Sciatic nerve (tissue), 2 donors: ENCODE measurements at regions of chr13 and their contacts with region 1.

Region 1: DNA sequence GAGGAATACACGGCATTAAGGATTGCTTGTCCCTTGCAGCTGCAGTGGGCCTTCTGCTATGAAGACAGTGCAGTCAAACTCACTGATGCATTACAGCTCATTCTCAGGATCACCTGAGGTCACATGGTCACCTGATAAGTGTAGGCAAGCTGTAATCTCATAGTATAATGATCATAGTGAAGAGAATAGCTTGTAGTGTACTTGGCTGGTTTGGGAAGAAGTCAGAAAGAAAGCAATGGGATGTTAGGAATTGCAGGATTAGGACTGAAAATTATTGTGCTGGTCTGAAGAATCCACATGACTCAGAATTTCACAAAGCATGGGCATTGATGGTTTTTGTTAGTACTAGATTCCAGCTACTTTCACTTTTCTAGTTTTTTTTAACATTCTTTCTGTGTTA is 76.7 kb downstream of the MBNL2 start:
- DNase-seq: no peak
- ATAC-seq: no peak

Region 2: DNA sequence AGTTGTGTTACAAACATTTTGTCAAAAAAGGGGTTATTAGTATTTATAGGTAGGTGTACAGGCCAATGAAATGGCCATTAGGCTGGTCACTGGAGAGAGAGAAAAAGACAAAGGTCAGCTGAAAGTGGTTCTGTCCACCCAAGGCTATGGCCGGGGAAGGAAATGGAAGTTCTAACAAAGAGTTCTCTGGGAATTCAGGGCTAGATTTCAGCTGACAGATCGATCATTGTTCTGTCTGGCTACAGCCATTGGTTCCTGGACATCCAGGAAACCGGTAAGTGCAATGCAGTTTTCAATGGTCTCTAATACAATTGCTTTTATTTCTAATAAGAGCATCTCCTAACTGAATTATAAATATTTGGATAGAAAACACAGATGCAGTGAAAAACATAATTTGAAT is 34.2 kb before region 1 on chr13:
- intact Hi-C with region 1: loop called (anchors 1 kb)
- DNase-seq: no peak
- ATAC-seq: no peak

Region 3: DNA sequence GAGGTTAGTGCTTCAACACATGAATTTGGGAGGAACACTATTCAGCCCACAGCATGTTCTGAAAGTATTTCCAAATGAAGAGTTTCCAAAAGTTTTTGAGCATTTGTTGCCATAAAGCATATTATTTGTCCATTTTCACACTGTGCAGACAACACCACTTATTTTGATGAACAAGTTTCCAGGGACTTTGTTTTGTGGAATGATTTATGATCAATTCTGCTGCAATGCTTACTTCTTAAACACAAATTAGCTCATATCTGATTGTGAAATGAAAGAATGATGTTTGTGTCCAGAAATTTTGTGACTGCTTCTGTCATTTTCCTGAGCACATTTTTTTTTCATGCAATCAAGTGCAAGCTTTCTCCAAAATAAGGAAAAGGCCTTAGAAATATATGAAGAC is 340.4 kb after region 1 on chr13:
- intact Hi-C with region 1: no loop called
- DNase-seq: no peak
- ATAC-seq: peak; percentile 39